Thyroid gland (tissue), 4 donors: ENCODE measurements at regions of chr1 and their contacts with region 1.

Region 1: DNA sequence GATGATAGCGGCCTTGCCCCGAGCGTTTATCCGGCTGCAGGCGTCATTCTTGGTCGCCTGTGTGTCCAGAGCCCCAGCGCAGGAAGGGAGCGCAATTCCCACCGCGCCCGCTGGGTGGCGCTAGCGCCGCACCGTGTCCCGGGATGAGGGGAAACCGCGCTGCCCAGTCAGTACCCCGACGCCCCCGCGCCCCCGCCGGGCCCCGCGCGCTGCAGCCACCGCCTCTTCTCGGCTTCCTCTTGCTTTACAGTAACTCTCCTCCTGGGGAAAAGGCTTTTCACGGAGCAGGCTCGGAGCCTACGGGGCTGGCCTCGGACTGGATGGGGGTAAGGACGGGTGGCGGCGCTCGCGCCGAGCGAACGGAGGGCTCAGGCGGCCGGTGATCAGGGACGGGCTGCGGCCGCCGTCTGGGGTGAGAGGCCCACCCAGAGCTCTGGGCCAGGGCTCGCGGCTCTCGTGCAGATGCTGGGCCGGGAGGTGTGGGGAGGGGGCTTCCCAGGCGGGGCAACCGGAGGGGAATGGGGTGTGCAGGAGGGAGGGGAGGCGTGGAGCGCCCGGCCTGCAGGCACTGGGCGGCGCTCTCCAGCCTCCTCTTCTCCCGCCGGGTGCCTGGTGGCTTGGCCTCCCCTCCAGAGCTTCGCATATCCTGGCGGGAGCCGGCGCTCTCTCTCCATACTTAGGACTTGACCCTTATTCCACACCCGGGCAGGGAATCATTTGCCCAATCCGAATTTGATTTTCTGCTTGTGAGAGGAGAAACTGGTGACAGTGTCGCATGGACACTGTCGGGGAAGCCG is 29.8 kb downstream of the TEX35 start:
- DNase-seq: peak; percentile 87
- H3K4me3 ChIP-seq: peak overlapping the region; percentile 33 to 82 (median 60)
- H3K27ac ChIP-seq: peak overlapping the region; percentile 33 to 80 (median 79)
- H3K4me1 ChIP-seq: peaks cover 5 to 14% of the 10 kb centered on the region in 2 donors
- H3K27me3 ChIP-seq: no peaks in the 10 kb centered on the region
- CTCF ChIP-seq: peak; percentile 88 to 98 (median 96)
- POLR2A ChIP-seq: no peak

Region 2: DNA sequence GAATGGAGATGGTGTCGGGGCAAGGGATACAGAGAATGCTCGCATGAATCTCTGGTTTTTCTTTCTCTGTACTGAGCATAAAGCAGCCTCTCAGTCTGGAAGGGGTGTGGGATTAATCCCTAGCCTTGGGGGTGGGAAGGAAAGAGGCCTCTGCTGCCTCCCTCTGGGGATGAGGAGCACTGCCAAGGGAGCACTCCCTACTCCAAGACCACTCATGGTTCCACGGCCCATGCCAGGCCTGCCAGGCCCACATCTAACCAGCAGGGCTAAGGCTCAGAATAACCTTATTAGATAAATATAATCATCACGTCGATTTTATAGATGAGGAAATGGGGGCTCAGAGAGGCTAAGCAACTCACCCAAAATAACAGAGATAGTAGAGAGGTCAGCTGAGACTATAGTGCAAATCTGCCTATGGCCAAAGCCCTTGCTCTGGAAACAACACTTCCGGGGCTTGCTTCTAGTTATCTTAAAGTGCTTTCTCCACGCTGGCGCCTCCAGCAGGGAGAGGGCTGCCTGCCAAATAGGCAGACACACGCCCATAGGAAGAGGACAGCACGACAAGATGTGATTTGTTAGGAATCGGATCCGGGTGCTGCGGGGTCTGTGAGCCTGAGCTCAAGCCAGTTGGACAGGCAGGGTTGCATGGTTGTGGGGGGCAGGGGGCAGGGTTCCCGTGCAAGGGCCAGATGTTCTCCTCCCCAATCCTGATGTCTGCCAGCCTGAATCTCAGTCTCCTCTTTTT is 29.3 kb before region 1 on chr1:
- intact Hi-C with region 1: no loop called
- DNase-seq: peak in 1 of 2 donors; percentile 51
- H3K4me3 ChIP-seq: no peak overlapping the region
- H3K27ac ChIP-seq: no peak overlapping the region
- H3K4me1 ChIP-seq: no peaks in the 10 kb centered on the region
- H3K27me3 ChIP-seq: no peaks in the 10 kb centered on the region
- CTCF ChIP-seq: no peak
- POLR2A ChIP-seq: no peak

Region 3: DNA sequence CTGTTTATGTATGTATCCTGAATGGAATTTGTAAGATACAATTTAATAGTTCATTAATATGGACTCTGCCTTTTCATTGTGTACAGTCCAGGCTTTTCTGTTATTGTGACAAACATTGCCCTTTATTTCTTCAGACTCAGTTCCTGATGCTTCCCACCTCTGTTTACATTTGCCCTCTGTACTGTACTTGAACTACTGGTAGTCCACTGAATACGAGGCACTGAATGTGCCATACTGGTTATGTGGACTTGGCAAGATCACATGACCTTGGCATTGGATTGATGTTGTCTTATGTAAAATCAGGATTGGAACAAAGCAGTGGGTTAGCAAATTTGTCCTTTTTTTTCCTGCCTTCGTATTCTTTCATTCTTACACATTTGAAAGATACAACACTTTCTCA is 210.1 kb after region 1 on chr1:
- intact Hi-C with region 1: loop called (anchors 2 kb)
- DNase-seq: no peak
- H3K4me3 ChIP-seq: no peak overlapping the region
- H3K27ac ChIP-seq: no peak overlapping the region
- H3K4me1 ChIP-seq: no peaks in the 10 kb centered on the region
- H3K27me3 ChIP-seq: no peaks in the 10 kb centered on the region
- CTCF ChIP-seq: no peak
- POLR2A ChIP-seq: no peak